ENCODE measurements at regions of chr17 and their contacts with region 1.

Region 1: GRCh38 chr17:44110823-44111633 is 12.4 kb downstream of the HDAC5 start:
- DNase-seq: peak; percentile 98 to 100 (median 99)
- H3K4me3 ChIP-seq: peak overlapping the region in 1 of 4 donors; percentile 60
- H3K27ac ChIP-seq: peak overlapping the region in 4 of 5 donors; percentile 68 to 88 (median 85)
- H3K4me1 ChIP-seq: peaks cover 49 to 72% of the 10 kb centered on the region in 2 donors
- H3K27me3 ChIP-seq: no peaks in the 10 kb centered on the region
- CTCF ChIP-seq: peak in 3 of 6 experiments; percentile 2 to 17 (median 11)
- POLR2A ChIP-seq: peak in 1 of 2 donors; percentile 93

Region 2: DNA sequence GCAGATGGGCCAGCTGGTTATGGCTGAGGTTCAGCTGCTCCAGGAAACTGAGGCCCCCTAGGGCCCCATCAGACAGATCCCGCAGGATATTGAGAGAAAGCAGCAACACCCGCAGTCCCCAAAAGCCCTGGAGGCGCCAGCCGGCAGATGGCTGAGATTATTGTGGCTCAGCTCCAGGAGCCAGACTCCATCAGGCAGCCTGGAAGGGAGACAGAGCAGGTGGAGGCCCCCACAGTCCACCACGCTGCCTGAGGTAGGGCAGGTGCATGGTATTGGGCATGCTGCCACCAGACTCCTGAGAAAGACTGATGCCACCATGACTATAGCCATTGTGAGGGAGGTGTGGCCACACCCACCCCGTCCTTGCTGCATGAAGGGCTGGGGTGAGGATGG is 86.8 kb before region 1 on chr17:
- intact Hi-C with region 1: no loop called
- DNase-seq: no peak
- H3K4me3 ChIP-seq: no peak overlapping the region
- H3K27ac ChIP-seq: no peak overlapping the region
- H3K4me1 ChIP-seq: no peaks in the 10 kb centered on the region
- H3K27me3 ChIP-seq: no peaks in the 10 kb centered on the region
- CTCF ChIP-seq: no peak
- POLR2A ChIP-seq: no peak

Region 3: DNA sequence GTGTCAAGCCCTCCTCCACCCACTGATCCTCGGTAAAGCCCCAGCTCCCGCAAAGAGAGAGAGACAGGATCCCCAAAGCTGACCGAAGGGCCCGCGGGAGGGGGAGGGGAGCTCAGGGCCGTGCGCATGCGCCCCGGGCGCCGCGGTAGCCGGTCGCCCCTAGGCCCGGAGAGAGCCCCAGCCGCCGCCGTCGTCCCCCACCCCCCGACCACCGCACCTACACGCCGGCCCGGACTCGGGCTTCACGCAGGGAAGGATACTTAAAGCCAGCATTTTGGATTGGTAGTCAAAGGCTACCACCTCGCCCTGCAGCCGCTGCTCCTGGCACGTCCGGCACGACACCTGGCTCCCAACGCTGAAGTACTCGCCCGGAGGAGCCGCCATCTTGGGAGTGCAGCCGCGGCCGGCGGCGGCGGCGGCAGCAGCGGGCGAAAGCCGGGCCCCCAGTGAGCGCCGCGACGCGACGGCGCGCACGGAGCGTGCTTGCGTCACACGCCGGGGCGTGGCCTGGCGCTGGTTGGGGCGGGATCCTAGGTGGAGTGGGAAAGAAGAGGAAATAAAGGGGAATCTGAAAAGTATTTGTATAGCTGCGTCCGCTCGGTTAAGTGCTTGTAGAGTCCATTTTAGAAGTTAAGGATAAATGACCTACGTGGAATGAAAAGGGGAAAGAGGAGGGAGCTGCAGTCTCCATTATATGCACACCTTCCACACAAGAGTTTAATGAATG is 44.7 kb before region 1 on chr17 and contains the start of gene LSM12:
- intact Hi-C with region 1: loop called in 1 of 2 experiments (anchors 10 kb)
- DNase-seq: peak; percentile 84 to 92 (median 90)
- H3K4me3 ChIP-seq: peak within 1 kb of the TSS; percentile 38 to 81 (median 74)
- H3K27ac ChIP-seq: peak within 1 kb of the TSS; percentile 88 to 98 (median 91)
- H3K4me1 ChIP-seq: peaks cover 17 to 41% of the 10 kb centered on the region in 2 donors
- H3K27me3 ChIP-seq: no peaks in the 10 kb centered on the region
- CTCF ChIP-seq: no peak
- POLR2A ChIP-seq: peak; percentile 69 to 87
- total RNA-seq, gene LSM12: 19.8 to 53.0 (median 37.7) TPM

Region 4: GRCh38 chr17:44084131-44084544 is 26.9 kb before region 1 on chr17:
- intact Hi-C with region 1: loop called in 1 of 2 experiments (anchors 5 kb)
- DNase-seq: no peak
- H3K4me3 ChIP-seq: no peak overlapping the region
- H3K27ac ChIP-seq: no peak overlapping the region
- H3K4me1 ChIP-seq: peaks cover 4 to 8% of the 10 kb centered on the region in 2 donors
- H3K27me3 ChIP-seq: no peaks in the 10 kb centered on the region
- CTCF ChIP-seq: peak in 3 of 6 experiments; percentile 14 to 23 (median 20)
- POLR2A ChIP-seq: no peak

Measured in adrenal gland (tissue), 19 donors.